ENCODE measurements at regions of chr13 and their contacts with region 1.

Region 1: GRCh38 chr13:46387064-46387851 is at the start of gene RUBCNL:
- DNase-seq: peak; percentile 77
- H3K4me3 Mint-ChIP-seq: peak within 1 kb of the TSS; percentile 77
- H3K27ac Mint-ChIP-seq: no peak within 1 kb of the TSS
- H3K4me1 Mint-ChIP-seq: peaks cover 22% of the 10 kb centered on the region
- H3K27me3 Mint-ChIP-seq: peaks cover 28% of the 10 kb centered on the region
- total RNA-seq, gene RUBCNL: 3.6 to 3.7 TPM

Region 2: GRCh38 chr13:46168341-46168740 is 218.9 kb before region 1 on chr13:
- CTCF ChIA-PET with region 1: no interaction called
- intact Hi-C with region 1: loop called (anchors 5 kb)
- DNase-seq: peak; percentile 89
- H3K4me3 Mint-ChIP-seq: peak overlapping the region; percentile 67
- H3K27ac Mint-ChIP-seq: peak overlapping the region; percentile 94
- H3K4me1 Mint-ChIP-seq: peaks cover 92% of the 10 kb centered on the region
- H3K27me3 Mint-ChIP-seq: no peaks in the 10 kb centered on the region

Region 3: GRCh38 chr13:46211483-46212351 is 175.5 kb before region 1 on chr13 and contains the start of gene LRRC63:
- CTCF ChIA-PET with region 1: no interaction called
- intact Hi-C with region 1: loop called (anchors 2 kb)
- DNase-seq: peak; percentile 83
- H3K4me3 Mint-ChIP-seq: peak within 1 kb of the TSS; percentile 91
- H3K27ac Mint-ChIP-seq: peak within 1 kb of the TSS; percentile 91
- H3K4me1 Mint-ChIP-seq: peaks cover 14% of the 10 kb centered on the region
- H3K27me3 Mint-ChIP-seq: no peaks in the 10 kb centered on the region
- total RNA-seq, gene LRRC63: 0.24 to 0.32 TPM

Region 4: GRCh38 chr13:46341112-46341711 is 46.0 kb before region 1 on chr13:
- CTCF ChIA-PET with region 1: no interaction called
- intact Hi-C with region 1: loop called (anchors 1 kb)
- DNase-seq: peak; percentile 78
- H3K4me3 Mint-ChIP-seq: peak overlapping the region; percentile 63
- H3K27ac Mint-ChIP-seq: peak overlapping the region; percentile 92
- H3K4me1 Mint-ChIP-seq: peaks cover 52% of the 10 kb centered on the region
- H3K27me3 Mint-ChIP-seq: no peaks in the 10 kb centered on the region

Region 5: GRCh38 chr13:46354156-46355091 is 32.8 kb before region 1 on chr13:
- CTCF ChIA-PET with region 1: no interaction called
- intact Hi-C with region 1: loop called (anchors 1 kb)
- DNase-seq: peak; percentile 68
- H3K4me3 Mint-ChIP-seq: no peak overlapping the region
- H3K27ac Mint-ChIP-seq: peak overlapping the region; percentile 94
- H3K4me1 Mint-ChIP-seq: peaks cover 24% of the 10 kb centered on the region
- H3K27me3 Mint-ChIP-seq: no peaks in the 10 kb centered on the region

Region 6: GRCh38 chr13:46403851-46404732 is 16.8 kb after region 1 on chr13:
- CTCF ChIA-PET with region 1: interaction called, 3 read pairs
- intact Hi-C with region 1: loop called (anchors 1 kb)
- DNase-seq: peak; percentile 34
- H3K4me3 Mint-ChIP-seq: no peak overlapping the region
- H3K27ac Mint-ChIP-seq: no peak overlapping the region
- H3K4me1 Mint-ChIP-seq: peaks cover 11% of the 10 kb centered on the region
- H3K27me3 Mint-ChIP-seq: peaks cover 4% of the 10 kb centered on the region

Region 7: DNA sequence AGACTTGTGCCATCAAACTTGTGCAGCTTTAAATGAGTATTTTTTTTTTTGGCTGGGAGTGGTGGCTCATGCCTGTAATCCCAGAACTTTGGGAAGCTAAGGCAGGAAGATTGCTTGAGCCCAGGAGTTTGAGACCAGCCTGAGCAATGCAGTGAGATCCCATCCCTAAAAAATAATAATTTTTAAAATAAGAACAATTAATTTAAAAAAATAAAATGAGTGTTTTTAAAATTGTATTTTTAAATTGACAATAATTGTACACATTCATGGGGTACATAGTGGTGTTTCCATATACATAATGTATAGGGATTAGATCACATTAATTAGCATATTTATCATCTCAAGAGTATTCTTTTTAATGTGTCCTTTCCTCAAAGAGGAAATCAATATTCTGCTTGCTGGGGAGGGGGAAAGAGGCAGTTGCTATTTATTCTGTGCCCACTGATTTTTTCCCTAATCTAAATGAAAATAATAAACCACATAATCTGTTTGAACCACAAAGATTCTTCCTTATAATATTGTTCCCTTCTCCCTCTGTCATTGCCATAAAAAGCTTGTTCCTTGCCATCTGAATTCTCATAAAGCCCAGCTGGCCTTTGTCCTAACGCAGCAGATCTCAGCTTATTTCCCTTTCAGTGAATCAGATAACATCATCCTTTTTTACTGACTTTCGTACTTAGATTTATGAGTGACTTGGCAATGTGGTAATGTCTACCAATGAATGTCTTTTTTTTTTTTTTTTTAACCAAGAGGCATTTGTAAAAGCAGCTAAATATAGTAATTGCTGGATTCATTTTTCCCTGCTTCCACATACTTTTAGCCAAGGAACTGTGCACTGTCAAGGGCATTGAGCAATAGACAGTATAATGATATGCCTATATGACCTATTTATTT is 81.6 kb after region 1 on chr13:
- CTCF ChIA-PET with region 1: no interaction called
- intact Hi-C with region 1: no loop called
- DNase-seq: no peak
- H3K4me3 Mint-ChIP-seq: no peak overlapping the region
- H3K27ac Mint-ChIP-seq: no peak overlapping the region
- H3K4me1 Mint-ChIP-seq: no peaks in the 10 kb centered on the region
- H3K27me3 Mint-ChIP-seq: no peaks in the 10 kb centered on the region

Region 8: DNA sequence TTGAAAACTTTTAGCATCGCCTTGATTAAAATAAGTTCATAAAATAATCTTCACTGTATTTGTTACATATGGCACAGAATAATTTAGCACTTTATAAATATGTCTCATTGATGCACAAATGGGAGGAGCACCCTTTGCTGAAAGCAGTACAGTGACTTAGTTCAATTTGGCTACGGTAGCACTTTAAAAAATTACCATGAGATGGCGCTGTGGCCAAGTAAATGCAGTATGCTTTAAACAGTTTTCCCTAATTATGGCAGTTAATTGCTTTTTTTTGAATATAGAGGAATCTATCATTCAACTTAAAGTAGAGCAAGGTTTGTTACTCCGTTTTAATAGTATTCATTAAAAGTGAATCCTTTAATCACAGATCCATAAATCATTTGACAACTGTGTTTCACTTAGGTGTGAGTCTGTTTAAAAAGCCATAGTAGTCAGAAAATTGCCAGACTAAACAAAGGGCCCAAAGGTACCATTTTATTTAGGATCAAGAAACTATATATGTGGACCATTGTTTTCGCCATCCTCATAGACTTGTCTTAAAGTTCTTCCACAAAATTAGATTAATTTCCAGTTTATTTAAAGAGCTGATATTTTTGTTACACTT is 444.4 kb after region 1 on chr13:
- CTCF ChIA-PET with region 1: no interaction called
- intact Hi-C with region 1: no loop called
- DNase-seq: peak; percentile 63
- H3K4me3 Mint-ChIP-seq: no peak overlapping the region
- H3K27ac Mint-ChIP-seq: no peak overlapping the region
- H3K4me1 Mint-ChIP-seq: no peaks in the 10 kb centered on the region
- H3K27me3 Mint-ChIP-seq: no peaks in the 10 kb centered on the region

Measured in activated naive CD4-positive, alpha-beta T cell treated with anti-CD3 and anti-CD28 coated beads for 36 hours (primary cell).